PC-9 (cell line): ENCODE measurements at regions of chr14 and their contacts with region 1.

Region 1: DNA sequence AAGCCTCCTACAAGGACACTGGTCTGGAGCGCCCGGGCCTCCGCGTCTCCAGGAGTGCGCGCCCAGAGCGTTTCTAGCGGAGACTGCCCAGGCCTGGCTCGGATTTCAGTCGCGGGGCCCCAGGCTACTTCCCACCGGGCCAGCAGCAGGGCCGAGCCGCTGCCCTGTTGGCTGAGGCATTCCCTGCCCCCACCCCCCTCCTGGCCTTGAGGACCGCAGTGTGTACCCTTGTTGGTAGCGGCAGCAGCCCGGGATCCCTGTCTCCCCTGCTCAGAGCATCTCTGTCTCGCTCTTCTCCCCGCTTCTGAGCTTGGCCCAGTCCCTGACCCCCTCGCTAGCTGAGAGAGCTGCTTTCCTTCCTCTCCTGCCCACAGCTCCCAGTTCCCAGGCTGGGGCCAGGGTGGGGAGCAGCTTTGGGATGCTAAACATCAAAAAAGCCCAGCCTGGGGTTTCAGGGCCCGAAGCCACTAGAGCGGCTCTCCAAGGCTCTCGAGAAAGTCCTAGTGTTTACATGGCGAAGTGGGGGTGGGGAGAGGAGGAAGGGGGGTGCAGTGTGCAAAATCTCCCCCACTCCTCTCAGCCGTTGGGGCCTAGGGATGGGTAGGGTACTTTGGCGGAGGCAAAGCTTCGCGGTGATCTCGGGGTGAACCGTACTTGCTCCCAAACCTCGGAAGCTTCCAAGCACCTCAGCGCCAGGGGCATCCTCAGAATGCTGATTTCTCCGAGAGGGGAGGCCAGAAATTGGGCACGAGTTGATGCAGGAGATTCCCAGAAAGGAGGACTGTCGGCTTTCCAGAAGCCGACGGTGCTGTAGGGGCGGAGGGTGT is 6.4 kb downstream of the NKX2-1 start:
- DNase-seq: no peak
- H3K4me3 ChIP-seq: no peak overlapping the region
- H3K27ac ChIP-seq: no peak overlapping the region
- H3K4me1 ChIP-seq: no peaks in the 10 kb centered on the region
- H3K27me3 ChIP-seq: 0 out of 2 replicates have a peak, but pooled peaks cover 3% of the 10 kb centered on the region
- CTCF ChIP-seq: no peak

Region 2: GRCh38 chr14:36478782-36479181 is 34.9 kb before region 1 on chr14:
- CTCF ChIA-PET with region 1: no interaction called
- POLR2A ChIA-PET with region 1: no interaction called
- intact Hi-C with region 1: no loop called
- DNase-seq: peak; percentile 11 to 43
- H3K4me3 ChIP-seq: no peak overlapping the region
- H3K27ac ChIP-seq: no peak overlapping the region
- H3K4me1 ChIP-seq: no peaks in the 10 kb centered on the region
- H3K27me3 ChIP-seq: no peaks in the 10 kb centered on the region
- CTCF ChIP-seq: no peak

Region 3: DNA sequence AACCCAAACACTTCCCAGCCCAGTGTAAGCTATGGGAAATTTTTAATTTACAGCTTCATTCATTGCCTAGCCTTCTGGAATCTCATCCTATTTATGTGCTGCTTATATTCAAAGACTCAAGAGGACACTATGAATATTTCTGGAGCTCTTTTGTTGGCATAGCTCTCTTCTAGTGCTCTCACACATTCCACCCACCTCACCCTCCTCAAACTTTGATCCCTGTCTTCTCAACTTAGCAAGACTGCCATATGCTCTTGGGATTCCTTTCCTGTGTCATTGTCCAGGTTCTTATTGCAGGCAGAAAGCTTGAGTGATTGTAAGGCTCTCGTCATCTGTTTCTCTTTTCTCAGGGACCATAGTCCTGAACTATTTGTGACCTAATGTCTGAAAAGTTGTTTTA is 24.4 kb after region 1 on chr14:
- CTCF ChIA-PET with region 1: interaction called, 13 read pairs
- POLR2A ChIA-PET with region 1: no interaction called
- intact Hi-C with region 1: no loop called
- DNase-seq: no peak
- H3K4me3 ChIP-seq: no peak overlapping the region
- H3K27ac ChIP-seq: no peak overlapping the region
- H3K4me1 ChIP-seq: no peaks in the 10 kb centered on the region
- H3K27me3 ChIP-seq: no peaks in the 10 kb centered on the region
- CTCF ChIP-seq: no peak